Pancreas (tissue), 10 donors: ENCODE measurements at regions of chr17 and their contacts with region 1.

Region 1: GRCh38 chr17:35529866-35530265 is 7.6 kb downstream of the SLFN12L start:
- DNase-seq: no peak
- ATAC-seq: no peak
- H3K4me3 ChIP-seq: no peak overlapping the region
- H3K27ac ChIP-seq: no peak overlapping the region
- H3K4me1 ChIP-seq: no peaks in the 10 kb centered on the region
- H3K27me3 ChIP-seq: no peaks in the 10 kb centered on the region
- CTCF ChIP-seq: no peak

Region 2: GRCh38 chr17:35312790-35313711 is 216.8 kb before region 1 on chr17:
- intact Hi-C with region 1: loop called in 2 of 3 experiments (anchors 5 kb)
- DNase-seq: peak in 4 of 6 donors; percentile 14 to 47 (median 38)
- ATAC-seq: peak; percentile 87 to 95 (median 94)
- H3K4me3 ChIP-seq: peak overlapping the region in 1 of 4 donors; percentile 22
- H3K27ac ChIP-seq: no peak overlapping the region
- H3K4me1 ChIP-seq: peaks cover 0 to 3% (median 0%) of the 10 kb centered on the region in 3 donors
- H3K27me3 ChIP-seq: no peaks in the 10 kb centered on the region
- CTCF ChIP-seq: peak; percentile 54 to 69 (median 66)